ENCODE measurements at regions of chr11 and their contacts with region 1.

Region 1: GRCh38 chr11:47552566-47553416 is at the start of gene CELF1:
- DNase-seq: peak; percentile 88 to 95 (median 92)
- ATAC-seq: peak; percentile 99
- H3K4me3 ChIP-seq: peak within 1 kb of the TSS; percentile 87
- H3K4me3 Mint-ChIP-seq: peak within 1 kb of the TSS; percentile 93 to 100 (median 96)
- H3K27ac ChIP-seq: peak within 1 kb of the TSS; percentile 89
- H3K27ac Mint-ChIP-seq: peak within 1 kb of the TSS; percentile 86 to 97 (median 95)
- H3K4me1 ChIP-seq: peaks cover 27 to 34% of the 10 kb centered on the region in 2 donors
- H3K4me1 Mint-ChIP-seq: peaks cover 36 to 57% (median 42%) of the 10 kb centered on the region in 7 donors
- H3K27me3 ChIP-seq: no peaks in the 10 kb centered on the region
- H3K27me3 Mint-ChIP-seq: no peaks in the 10 kb centered on the region
- total RNA-seq, gene CELF1: 107 to 148 (median 129) TPM

Region 2: DNA sequence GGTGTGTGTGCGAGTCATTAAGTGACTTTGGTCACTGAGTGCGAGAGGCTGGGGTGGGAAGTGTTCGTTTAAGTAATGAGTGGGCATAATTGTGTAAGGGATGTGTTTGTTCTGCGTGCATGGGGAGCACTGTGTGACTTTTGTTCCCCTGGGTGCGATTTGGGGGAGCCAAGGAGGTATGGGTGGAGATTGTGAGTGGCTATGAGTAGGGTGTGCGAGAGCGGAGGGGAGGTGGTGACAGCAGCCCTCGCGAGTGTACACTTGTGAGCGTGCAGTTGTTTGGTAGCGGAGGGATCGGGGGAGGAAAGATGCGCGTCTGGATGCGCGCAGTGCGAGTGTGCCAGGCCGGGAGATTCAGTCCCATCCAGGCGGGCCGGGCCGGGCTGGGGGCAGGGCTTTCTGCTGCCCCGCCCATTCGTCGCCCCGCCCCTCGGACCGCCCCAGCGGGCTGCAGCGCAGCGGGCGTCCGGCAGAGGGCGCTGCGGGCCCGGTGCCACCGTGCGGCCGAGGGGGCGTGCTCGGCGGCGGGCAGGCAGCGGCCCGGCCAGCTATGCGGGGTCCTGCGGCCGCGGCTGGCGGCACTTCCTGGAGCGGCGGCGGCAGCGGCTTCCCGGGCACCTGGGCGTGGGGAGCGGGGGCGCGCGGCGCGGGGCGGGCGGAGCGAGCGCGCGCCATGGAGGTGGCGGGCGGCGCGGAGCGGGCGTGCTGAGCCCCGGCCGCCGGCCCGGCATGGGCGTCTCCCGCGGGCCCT is 1205.7 kb before region 1 on chr11 and contains the start of gene DGKZ:
- CTCF ChIA-PET with region 1: no interaction called
- POLR2A ChIA-PET with region 1: no interaction called
- intact Hi-C with region 1: loop called in 1 of 2 experiments (anchors 10 kb)
- DNase-seq: peak; percentile 85 to 100 (median 96)
- ATAC-seq: peak; percentile 92
- H3K4me3 ChIP-seq: peak within 1 kb of the TSS; percentile 91
- H3K4me3 Mint-ChIP-seq: peak within 1 kb of the TSS; percentile 93 to 97 (median 95)
- H3K27ac ChIP-seq: peak within 1 kb of the TSS; percentile 83
- H3K27ac Mint-ChIP-seq: peak within 1 kb of the TSS; percentile 89 to 98 (median 94)
- H3K4me1 ChIP-seq: peaks cover 46 to 79% of the 10 kb centered on the region in 2 donors
- H3K4me1 Mint-ChIP-seq: peaks cover 61 to 85% (median 75%) of the 10 kb centered on the region in 7 donors
- H3K27me3 ChIP-seq: no peaks in the 10 kb centered on the region
- H3K27me3 Mint-ChIP-seq: peaks cover 0 to 3% (median 0%) of the 10 kb centered on the region in 5 donors
- total RNA-seq, gene DGKZ: 146 to 291 (median 263) TPM

Region 3: GRCh38 chr11:47233989-47234668 is 318.7 kb before region 1 on chr11:
- CTCF ChIA-PET with region 1: no interaction called
- POLR2A ChIA-PET with region 1: no interaction called
- intact Hi-C with region 1: no loop called
- DNase-seq: peak in 6 of 9 donors; percentile 17 to 46 (median 32)
- ATAC-seq: peak; percentile 8
- H3K4me3 ChIP-seq: peak overlapping the region; percentile 38
- H3K4me3 Mint-ChIP-seq: peak overlapping the region; percentile 35 to 90 (median 80)
- H3K27ac ChIP-seq: peak overlapping the region; percentile 81
- H3K27ac Mint-ChIP-seq: peak overlapping the region; percentile 77 to 99 (median 94)
- H3K4me1 ChIP-seq: peaks cover 5 to 13% of the 10 kb centered on the region in 2 donors
- H3K4me1 Mint-ChIP-seq: peaks cover 11 to 34% (median 30%) of the 10 kb centered on the region in 7 donors
- H3K27me3 ChIP-seq: no peaks in the 10 kb centered on the region
- H3K27me3 Mint-ChIP-seq: no peaks in the 10 kb centered on the region

Region 4: DNA sequence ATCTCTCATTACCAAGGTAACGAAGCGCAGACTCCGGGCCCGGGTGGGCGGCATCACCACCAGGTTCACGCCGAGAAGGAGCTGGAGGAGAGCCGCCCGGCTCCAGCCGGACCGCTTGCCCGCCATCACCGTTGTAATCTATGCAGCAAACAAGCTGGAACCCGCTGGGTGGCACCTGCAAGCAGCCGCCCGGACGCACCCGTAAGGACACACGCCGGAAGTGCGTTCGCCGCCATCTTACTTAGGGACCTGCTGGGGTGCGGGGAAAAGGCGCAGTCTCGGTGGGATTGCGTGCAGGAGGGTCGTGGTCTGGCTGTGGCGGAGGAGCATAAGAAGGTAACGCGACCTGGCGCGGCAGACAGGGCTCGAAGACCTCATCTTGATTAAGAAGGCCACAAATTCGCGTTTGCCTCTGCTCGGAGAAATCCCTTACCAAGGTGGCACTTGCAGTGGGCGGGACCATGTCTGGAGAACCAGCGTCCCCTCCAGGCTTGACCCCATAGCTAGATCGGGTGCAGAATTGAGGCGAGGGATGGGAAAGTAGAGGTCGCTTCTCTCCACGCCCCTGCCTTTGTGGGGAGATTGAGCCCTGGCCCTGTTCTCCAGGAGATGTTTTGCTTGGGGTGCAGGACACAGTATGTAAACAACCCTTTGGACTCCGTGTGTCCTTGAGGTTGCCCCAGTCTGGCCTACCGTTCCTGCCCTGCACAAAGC is 304.0 kb before region 1 on chr11 and contains the start of gene ACP2:
- CTCF ChIA-PET with region 1: no interaction called
- POLR2A ChIA-PET with region 1: no interaction called
- intact Hi-C with region 1: loop called in 1 of 2 experiments (anchors 2 kb)
- DNase-seq: peak; percentile 83 to 91 (median 86)
- ATAC-seq: peak; percentile 99
- H3K4me3 ChIP-seq: peak within 1 kb of the TSS; percentile 93
- H3K4me3 Mint-ChIP-seq: peak within 1 kb of the TSS; percentile 93 to 100 (median 98)
- H3K27ac ChIP-seq: peak within 1 kb of the TSS; percentile 87
- H3K27ac Mint-ChIP-seq: peak within 1 kb of the TSS; percentile 94 to 100 (median 98)
- H3K4me1 ChIP-seq: peaks cover 11 to 15% of the 10 kb centered on the region in 2 donors
- H3K4me1 Mint-ChIP-seq: peaks cover 13 to 39% (median 29%) of the 10 kb centered on the region in 7 donors
- H3K27me3 ChIP-seq: no peaks in the 10 kb centered on the region
- H3K27me3 Mint-ChIP-seq: no peaks in the 10 kb centered on the region
- total RNA-seq, gene ACP2: 17.6 to 38.1 (median 24.3) TPM

Region 5: DNA sequence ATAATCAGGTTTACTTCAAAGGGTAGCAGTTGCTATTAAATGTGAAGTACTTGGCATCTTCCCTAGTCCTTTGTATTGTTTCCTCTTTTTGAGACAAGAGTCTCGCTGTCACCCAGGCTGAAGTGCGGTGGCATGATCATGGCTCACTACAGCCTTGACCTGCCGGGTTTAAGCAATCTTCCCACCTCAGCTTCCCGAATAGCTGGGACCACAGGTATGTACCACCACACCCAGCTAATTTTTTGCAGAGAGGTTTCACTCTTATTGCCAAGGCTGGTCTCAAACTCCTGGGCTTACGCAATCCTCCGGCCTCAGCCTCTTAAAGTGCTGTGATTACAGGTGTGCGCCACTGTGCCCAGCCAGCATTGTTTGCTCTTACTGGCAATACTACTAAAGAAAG is 67.7 kb before region 1 on chr11:
- CTCF ChIA-PET with region 1: interaction called, 3 read pairs
- POLR2A ChIA-PET with region 1: no interaction called
- intact Hi-C with region 1: loop called in 1 of 2 experiments (anchors 2 kb)
- DNase-seq: no peak
- ATAC-seq: no peak
- H3K4me3 ChIP-seq: no peak overlapping the region
- H3K4me3 Mint-ChIP-seq: no peak overlapping the region
- H3K27ac ChIP-seq: no peak overlapping the region
- H3K27ac Mint-ChIP-seq: no peak overlapping the region
- H3K4me1 ChIP-seq: no peaks in the 10 kb centered on the region
- H3K4me1 Mint-ChIP-seq: peaks cover 0 to 15% (median 3%) of the 10 kb centered on the region in 7 donors
- H3K27me3 ChIP-seq: no peaks in the 10 kb centered on the region
- H3K27me3 Mint-ChIP-seq: no peaks in the 10 kb centered on the region

Region 6: GRCh38 chr11:47523468-47524225 is 29.1 kb before region 1 on chr11:
- CTCF ChIA-PET with region 1: interaction called, 3 read pairs
- POLR2A ChIA-PET with region 1: no interaction called
- intact Hi-C with region 1: loop called (anchors 1 kb)
- DNase-seq: peak in 7 of 9 donors; percentile 39 to 78 (median 62)
- ATAC-seq: peak; percentile 92
- H3K4me3 ChIP-seq: peak overlapping the region; percentile 24
- H3K4me3 Mint-ChIP-seq: peak overlapping the region; percentile 30 to 80 (median 73)
- H3K27ac ChIP-seq: peak overlapping the region; percentile 78
- H3K27ac Mint-ChIP-seq: peak overlapping the region; percentile 84 to 96 (median 90)
- H3K4me1 ChIP-seq: peaks cover 36 to 37% of the 10 kb centered on the region in 2 donors
- H3K4me1 Mint-ChIP-seq: peaks cover 46 to 88% (median 69%) of the 10 kb centered on the region in 7 donors
- H3K27me3 ChIP-seq: no peaks in the 10 kb centered on the region
- H3K27me3 Mint-ChIP-seq: no peaks in the 10 kb centered on the region

Region 7: GRCh38 chr11:47642099-47642855 is 89.5 kb after region 1 on chr11 and contains the start of gene MTCH2:
- CTCF ChIA-PET with region 1: interaction called, 3 read pairs
- POLR2A ChIA-PET with region 1: no interaction called
- intact Hi-C with region 1: loop called (anchors 1 to 2 kb)
- DNase-seq: peak; percentile 92 to 97 (median 95)
- ATAC-seq: peak; percentile 97
- H3K4me3 ChIP-seq: peak within 1 kb of the TSS; percentile 85
- H3K4me3 Mint-ChIP-seq: peak within 1 kb of the TSS; percentile 92 to 99 (median 96)
- H3K27ac ChIP-seq: peak within 1 kb of the TSS; percentile 83
- H3K27ac Mint-ChIP-seq: peak within 1 kb of the TSS; percentile 94 to 99 (median 97)
- H3K4me1 ChIP-seq: peaks cover 8 to 11% of the 10 kb centered on the region in 2 donors
- H3K4me1 Mint-ChIP-seq: peaks cover 17 to 32% (median 25%) of the 10 kb centered on the region in 7 donors
- H3K27me3 ChIP-seq: no peaks in the 10 kb centered on the region
- H3K27me3 Mint-ChIP-seq: no peaks in the 10 kb centered on the region
- total RNA-seq, gene MTCH2: 19.8 to 88.6 (median 21.1) TPM

Region 8: DNA sequence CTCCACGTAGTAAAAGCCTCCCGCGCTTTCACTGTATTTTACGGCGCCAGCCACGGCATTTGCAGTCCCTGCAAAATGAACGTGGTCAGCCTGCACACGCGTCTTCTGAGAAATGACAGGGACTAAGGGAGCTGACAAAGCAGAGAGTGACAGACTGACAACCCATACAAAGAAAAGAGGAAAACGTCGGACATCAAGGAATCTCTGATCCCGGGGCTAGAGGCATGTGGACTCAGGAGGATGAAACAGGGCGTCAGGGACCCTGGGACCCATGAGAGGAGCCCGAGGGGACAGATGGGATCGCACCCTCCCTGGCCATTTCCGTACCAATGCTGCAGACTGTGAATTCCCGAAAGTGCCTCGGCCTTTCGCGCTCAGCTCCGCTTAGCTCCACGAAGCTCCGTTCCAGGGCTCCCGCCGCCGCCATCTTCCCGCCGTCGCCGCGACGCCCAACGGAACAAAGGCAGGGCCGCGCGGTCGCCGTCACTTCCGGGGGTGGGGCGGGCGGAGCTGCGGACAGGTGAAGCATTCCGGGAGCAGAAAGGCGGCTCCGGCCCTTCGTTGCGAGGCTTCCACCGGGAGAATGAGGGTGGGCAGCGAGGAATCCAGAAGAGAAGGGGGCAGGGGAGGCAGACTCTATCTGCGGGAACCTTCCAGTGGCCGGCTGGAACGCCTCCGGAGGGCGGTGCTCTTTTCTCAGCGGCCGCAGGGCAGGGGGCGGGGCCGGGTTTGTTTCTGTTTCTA is 295.3 kb after region 1 on chr11 and contains the start of gene NUP160:
- CTCF ChIA-PET with region 1: no interaction called
- POLR2A ChIA-PET with region 1: no interaction called
- intact Hi-C with region 1: loop called in 1 of 2 experiments (anchors 1 kb)
- DNase-seq: peak; percentile 78 to 92 (median 85)
- ATAC-seq: peak; percentile 92
- H3K4me3 ChIP-seq: peak within 1 kb of the TSS; percentile 88
- H3K4me3 Mint-ChIP-seq: peak within 1 kb of the TSS; percentile 88 to 100 (median 98)
- H3K27ac ChIP-seq: peak within 1 kb of the TSS; percentile 97
- H3K27ac Mint-ChIP-seq: peak within 1 kb of the TSS; percentile 72 to 100 (median 98)
- H3K4me1 ChIP-seq: peaks cover 12 to 66% of the 10 kb centered on the region in 2 donors
- H3K4me1 Mint-ChIP-seq: peaks cover 38 to 71% (median 62%) of the 10 kb centered on the region in 7 donors
- H3K27me3 ChIP-seq: no peaks in the 10 kb centered on the region
- H3K27me3 Mint-ChIP-seq: peaks cover 0 to 2% (median 0%) of the 10 kb centered on the region in 5 donors
- total RNA-seq, gene NUP160: 53.9 to 68.0 (median 65.5) TPM

Region 9: DNA sequence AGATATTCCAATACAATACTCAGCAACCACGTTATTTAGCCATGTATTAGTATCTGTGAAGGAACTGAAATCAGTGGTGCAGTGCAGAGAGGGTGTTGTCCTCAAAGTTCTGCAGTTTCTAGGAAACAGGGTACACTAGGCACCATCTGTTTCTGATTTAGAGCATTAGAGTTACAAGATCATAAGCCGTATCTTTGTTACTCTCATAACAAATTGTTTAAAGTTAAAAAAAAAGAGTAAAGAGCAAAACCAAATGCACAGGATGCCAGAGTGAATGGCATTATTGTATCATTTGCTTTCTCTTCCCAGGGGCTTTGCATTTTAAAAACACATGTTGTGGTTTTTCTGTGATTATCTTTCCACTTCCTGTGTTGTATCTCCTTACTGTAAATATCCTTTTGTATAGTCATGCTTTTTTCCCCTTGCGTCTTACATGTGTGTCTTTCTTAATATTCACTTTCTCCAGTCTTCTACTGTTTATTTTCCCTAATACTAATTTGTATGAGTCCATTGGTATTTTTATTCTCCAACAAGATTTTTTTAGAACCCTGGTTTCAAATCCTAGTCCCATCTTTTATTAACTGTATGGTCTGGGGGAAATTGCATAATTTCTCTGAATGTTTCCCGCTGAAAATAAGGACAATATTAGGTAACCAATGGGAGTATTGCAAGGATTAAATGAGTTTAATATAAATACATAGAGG is 310.6 kb after region 1 on chr11:
- CTCF ChIA-PET with region 1: no interaction called
- POLR2A ChIA-PET with region 1: no interaction called
- intact Hi-C with region 1: no loop called
- DNase-seq: peak in 7 of 9 donors; percentile 34 to 84 (median 69)
- ATAC-seq: peak; percentile 76
- H3K4me3 ChIP-seq: no peak overlapping the region
- H3K4me3 Mint-ChIP-seq: peak overlapping the region; percentile 19 to 63 (median 54)
- H3K27ac ChIP-seq: peak overlapping the region; percentile 40
- H3K27ac Mint-ChIP-seq: peak overlapping the region; percentile 47 to 93 (median 70)
- H3K4me1 ChIP-seq: peaks cover 16 to 33% of the 10 kb centered on the region in 2 donors
- H3K4me1 Mint-ChIP-seq: peaks cover 13 to 49% (median 44%) of the 10 kb centered on the region in 7 donors
- H3K27me3 ChIP-seq: no peaks in the 10 kb centered on the region
- H3K27me3 Mint-ChIP-seq: no peaks in the 10 kb centered on the region

Region 10: DNA sequence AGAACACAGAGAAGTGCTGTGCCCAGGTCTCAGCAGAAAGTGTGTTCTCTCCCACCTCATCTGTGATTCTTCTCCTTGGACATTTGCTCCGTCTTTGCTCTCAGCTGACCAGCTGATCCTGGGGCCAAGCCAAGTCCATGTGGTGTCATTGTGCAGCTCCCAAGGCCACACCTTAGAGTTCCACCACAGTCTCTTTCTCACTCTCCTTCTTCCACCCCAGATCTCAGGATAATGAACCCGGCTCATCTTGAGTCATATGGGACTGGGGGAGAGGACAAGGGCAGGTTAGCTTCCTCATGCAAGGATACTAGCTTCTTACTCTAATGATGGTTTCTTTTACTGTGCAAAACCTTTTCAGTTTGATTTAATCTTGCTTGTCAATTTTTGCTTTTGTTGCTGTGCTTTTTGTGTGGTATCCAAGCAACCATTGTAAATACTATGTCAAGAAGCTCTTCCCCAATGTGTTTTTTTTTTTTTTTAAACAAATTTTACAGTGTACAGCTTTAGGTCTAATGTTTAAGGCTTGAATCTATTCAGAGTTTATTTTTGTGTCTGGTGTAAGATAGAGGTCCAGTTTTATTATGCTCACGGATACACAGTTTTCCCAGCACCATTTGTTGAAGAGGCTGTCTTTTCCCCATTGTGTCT is 588.8 kb after region 1 on chr11:
- CTCF ChIA-PET with region 1: no interaction called
- POLR2A ChIA-PET with region 1: no interaction called
- intact Hi-C with region 1: no loop called
- DNase-seq: peak in 2 of 9 donors; percentile 12 to 18
- ATAC-seq: peak; percentile 47
- H3K4me3 ChIP-seq: no peak overlapping the region
- H3K4me3 Mint-ChIP-seq: no peak overlapping the region
- H3K27ac ChIP-seq: no peak overlapping the region
- H3K27ac Mint-ChIP-seq: peak overlapping the region in 7 of 9 donors; percentile 35 to 72 (median 43)
- H3K4me1 ChIP-seq: no peaks in the 10 kb centered on the region
- H3K4me1 Mint-ChIP-seq: peaks cover 6 to 18% (median 10%) of the 10 kb centered on the region in 7 donors
- H3K27me3 ChIP-seq: no peaks in the 10 kb centered on the region
- H3K27me3 Mint-ChIP-seq: no peaks in the 10 kb centered on the region

Measured in naive thymus-derived CD4-positive, alpha-beta T cell (primary cell).